WTC11 (cell line): ENCODE measurements at regions of chr20 and their contacts with region 1.

Region 1: GRCh38 chr20:3716195-3716834 is 3.9 kb upstream of the SIGLEC1 start:
- DNase-seq: peak; percentile 70
- ATAC-seq: peak; percentile 98
- H3K4me3 Mint-ChIP-seq: no peak overlapping the region
- H3K27ac Mint-ChIP-seq: 0 out of 2 replicates have a peak overlapping the region, but pooled peaks have one; percentile 8
- H3K4me1 Mint-ChIP-seq: peaks cover 8% of the 10 kb centered on the region
- H3K27me3 Mint-ChIP-seq: no peaks in the 10 kb centered on the region
- CTCF ChIP-seq: peak; percentile 41; the same call in 1 of the 2 replicates

Region 2: GRCh38 chr20:3732327-3733118 is 16.2 kb after region 1 on chr20 and contains the start of gene HSPA12B:
- CTCF ChIA-PET with region 1: interaction called, 13 read pairs
- POLR2A ChIA-PET with region 1: no interaction called
- DNase-seq: peak; percentile 51
- ATAC-seq: peak; percentile 69
- H3K4me3 Mint-ChIP-seq: peak within 1 kb of the TSS; percentile 64
- H3K27ac Mint-ChIP-seq: no peak within 1 kb of the TSS
- H3K4me1 Mint-ChIP-seq: peaks cover 23% of the 10 kb centered on the region
- H3K27me3 Mint-ChIP-seq: peaks cover 43% of the 10 kb centered on the region
- CTCF ChIP-seq: no peak
- total RNA-seq, gene HSPA12B: 6.3 to 8.5 TPM (median 8.2 TPM) in 3 replicates

Region 3: DNA sequence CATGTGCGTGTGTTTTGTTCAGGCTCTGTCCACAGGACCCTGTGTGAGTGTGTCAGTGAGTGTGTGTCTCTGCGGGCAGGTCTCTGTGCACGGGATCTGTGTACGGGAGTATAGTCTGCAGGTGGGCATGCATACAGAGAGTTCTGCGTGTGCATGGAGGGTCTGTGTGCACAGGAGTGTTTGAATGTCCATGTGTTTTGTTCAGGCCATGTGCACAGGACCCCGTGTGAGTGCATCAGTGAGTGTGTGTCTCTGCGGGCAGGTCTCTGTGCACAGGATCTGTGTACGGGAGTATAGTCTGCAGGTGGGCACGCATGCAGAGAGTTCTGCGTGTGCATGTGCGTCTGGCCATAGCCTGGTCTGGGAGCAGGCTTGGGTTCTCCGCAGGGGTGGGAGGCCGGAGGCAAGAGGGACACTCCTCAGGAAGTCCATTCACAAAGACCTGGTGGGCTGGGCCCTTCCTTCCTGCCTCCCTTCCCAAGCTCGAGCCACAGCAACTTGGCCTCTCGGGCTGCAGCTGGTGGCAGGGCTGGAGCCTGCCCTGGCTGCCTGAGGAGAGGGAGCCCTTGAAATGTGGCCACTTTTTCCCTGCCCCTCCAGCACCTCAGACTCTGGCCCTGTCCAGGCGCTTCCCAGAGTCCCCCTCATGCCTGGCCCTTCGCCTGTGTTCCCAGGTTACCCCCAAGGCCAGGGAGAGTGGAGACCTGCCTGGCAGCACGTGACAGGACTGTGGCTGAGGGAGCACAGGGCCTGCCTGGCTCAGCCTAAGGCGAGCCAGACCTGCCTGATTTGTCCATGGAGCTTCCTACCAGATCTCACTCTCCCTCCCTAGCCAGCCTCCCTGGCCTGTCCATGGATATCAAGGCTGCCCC is 23.0 kb after region 1 on chr20:
- CTCF ChIA-PET with region 1: interaction called, 26 read pairs
- POLR2A ChIA-PET with region 1: no interaction called
- DNase-seq: no peak
- ATAC-seq: peak; percentile 35
- H3K4me3 Mint-ChIP-seq: no peak overlapping the region
- H3K27ac Mint-ChIP-seq: peak overlapping the region; percentile 68
- H3K4me1 Mint-ChIP-seq: peaks cover 24% of the 10 kb centered on the region
- H3K27me3 Mint-ChIP-seq: peaks cover 2% of the 10 kb centered on the region
- CTCF ChIP-seq: no peak

Region 4: DNA sequence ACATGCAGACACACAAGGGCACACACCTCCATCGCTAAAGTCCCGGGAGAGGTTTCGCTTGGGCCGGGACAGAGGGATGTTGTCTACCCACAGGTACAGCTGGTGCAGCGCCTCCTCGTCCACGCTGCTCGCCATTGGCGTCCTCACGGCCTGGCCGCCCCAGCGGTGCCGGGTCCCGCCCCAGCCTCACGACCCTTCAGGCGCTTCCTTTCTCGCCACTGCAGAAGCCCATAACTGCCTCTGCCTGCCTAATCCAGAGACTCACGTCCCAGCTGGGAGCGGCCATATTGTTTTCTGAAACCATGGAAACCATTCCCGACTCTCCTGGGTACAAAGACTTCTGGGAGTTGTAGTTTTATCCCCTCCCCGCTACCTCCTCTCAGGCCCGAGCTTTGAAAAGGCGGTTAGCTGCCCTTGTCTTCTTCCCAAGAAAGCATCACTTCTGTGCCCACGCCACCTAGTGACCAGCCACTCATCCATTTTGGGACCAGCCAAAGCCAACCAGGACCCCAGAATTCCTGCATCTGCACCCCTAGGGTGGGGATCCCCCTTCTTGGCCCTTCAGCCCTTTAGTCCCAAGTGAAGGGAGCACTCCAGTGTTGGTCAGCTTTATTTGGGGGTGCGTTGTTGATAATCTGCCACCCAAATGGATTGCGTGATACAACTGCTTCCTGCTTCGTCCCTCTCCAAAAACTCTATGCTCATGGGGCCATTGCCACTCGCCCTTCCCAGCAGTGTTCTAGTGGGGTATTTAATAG is 65.0 kb after region 1 on chr20 and contains the start of gene SPEF1:
- CTCF ChIA-PET with region 1: interaction called, 16 read pairs
- POLR2A ChIA-PET with region 1: no interaction called
- DNase-seq: peak; percentile 83
- ATAC-seq: peak; percentile 58
- H3K4me3 Mint-ChIP-seq: peak within 1 kb of the TSS; percentile 67
- H3K27ac Mint-ChIP-seq: peak within 1 kb of the TSS; percentile 29; the same call in 1 of the 2 replicates
- H3K4me1 Mint-ChIP-seq: peaks cover 45% of the 10 kb centered on the region
- H3K27me3 Mint-ChIP-seq: peaks cover 42% of the 10 kb centered on the region
- CTCF ChIP-seq: no peak
- total RNA-seq, gene SPEF1: 0.41 to 0.72 TPM (median 0.64 TPM) in 3 replicates